Caco-2 (cell line): ENCODE measurements at regions of chr5 and their contacts with region 1.

Region 1: DNA sequence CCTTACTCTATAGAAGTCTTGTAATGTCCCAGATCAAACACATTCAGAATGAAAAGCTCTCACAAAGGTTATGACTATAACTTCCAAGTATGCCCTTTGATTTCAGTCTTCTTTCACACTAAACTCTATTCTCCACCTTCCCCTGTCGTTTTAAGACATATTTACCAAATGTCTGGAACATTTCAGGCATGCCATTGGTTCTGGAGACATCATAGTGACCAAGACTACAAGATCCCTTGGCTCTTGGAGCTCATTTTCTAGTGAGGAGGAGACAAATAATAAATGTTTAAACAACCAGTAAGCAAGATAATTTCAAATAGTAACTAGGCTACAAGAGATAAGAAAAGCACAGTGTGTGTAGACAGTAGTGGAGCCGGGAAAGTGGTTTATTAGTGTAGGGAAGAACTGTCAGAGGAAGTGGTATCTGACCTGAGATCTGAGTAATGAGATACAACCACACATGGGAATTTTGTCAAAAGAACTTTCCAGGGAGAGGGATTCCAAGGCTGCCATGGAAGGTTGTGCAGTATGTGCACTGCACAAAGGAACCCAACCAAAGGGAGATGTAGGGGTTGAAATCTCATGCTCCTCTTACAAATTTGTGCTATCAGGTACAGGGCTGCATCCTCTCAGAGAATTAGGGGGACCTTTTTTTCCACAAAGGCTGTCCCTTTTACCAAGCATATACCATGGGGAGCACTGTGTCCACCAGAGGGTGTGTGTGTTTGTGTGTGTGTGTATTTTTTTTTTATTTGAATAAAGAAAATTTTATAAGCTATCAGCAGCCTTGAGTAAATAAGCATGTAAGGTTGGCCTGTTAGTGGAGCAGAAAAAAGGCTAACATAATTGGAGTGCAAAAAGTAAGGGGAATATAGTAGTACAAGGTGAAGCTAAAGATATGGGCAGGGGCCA is 1279.1 kb upstream of the WWC1 start:
- DNase-seq: peak in 1 of 2 experiments; percentile 40
- H3K4me3 ChIP-seq: no peak overlapping the region
- H3K4me3 Mint-ChIP-seq: peak overlapping the region; percentile 1
- H3K27ac Mint-ChIP-seq: peak overlapping the region; percentile 6
- H3K4me1 ChIP-seq: peaks cover 9% of the 10 kb centered on the region; the same call in 1 of the 2 replicates
- H3K4me1 Mint-ChIP-seq: peaks cover 12% of the 10 kb centered on the region
- H3K27me3 ChIP-seq: no peaks in the 10 kb centered on the region
- H3K27me3 Mint-ChIP-seq: no peaks in the 10 kb centered on the region
- CTCF ChIP-seq: no peak

Region 2: GRCh38 chr5:166961039-166961438 is 51.3 kb before region 1 on chr5:
- CTCF ChIA-PET with region 1: no interaction called
- POLR2A ChIA-PET with region 1: no interaction called
- intact Hi-C with region 1: loop called (anchors 5 kb)
- DNase-seq: no peak
- H3K4me3 ChIP-seq: no peak overlapping the region
- H3K4me3 Mint-ChIP-seq: no peak overlapping the region
- H3K27ac Mint-ChIP-seq: no peak overlapping the region
- H3K4me1 ChIP-seq: 0 out of 2 replicates have a peak, but pooled peaks cover 4% of the 10 kb centered on the region
- H3K4me1 Mint-ChIP-seq: peaks cover 21% of the 10 kb centered on the region
- H3K27me3 ChIP-seq: no peaks in the 10 kb centered on the region
- H3K27me3 Mint-ChIP-seq: no peaks in the 10 kb centered on the region
- CTCF ChIP-seq: peak in 1 of 2 experiments; percentile 40

Region 3: DNA sequence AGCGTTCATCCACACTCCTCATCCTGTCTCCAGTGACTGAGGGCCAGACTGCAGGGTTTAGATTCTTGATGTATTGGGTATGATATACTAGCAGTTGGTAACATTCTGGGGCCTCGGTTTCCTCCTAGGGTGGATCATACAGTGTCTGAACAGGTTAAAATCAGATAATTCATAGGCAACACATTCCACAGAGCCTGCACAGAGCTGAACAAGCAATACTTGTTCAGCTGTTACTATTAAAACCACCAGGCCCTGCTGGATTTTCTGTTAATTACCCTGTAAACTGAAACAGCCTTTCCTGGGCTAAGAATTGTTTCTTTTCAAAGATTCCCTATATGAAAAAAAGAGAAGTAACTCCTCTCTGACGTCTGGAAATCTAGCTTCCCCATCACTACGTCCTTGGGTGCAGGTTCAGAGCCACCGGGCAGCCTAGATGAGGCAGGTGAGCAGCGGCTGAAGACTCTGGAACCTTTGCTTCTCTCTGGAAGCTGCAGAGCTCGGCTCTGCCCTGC is 34.4 kb before region 1 on chr5:
- CTCF ChIA-PET with region 1: no interaction called
- POLR2A ChIA-PET with region 1: interaction called, 3 read pairs
- intact Hi-C with region 1: loop called (anchors 1 kb)
- DNase-seq: no peak
- H3K4me3 ChIP-seq: peak overlapping the region; percentile 50; the same call in 1 of the 2 replicates
- H3K4me3 Mint-ChIP-seq: peak overlapping the region; percentile 87
- H3K27ac Mint-ChIP-seq: no peak overlapping the region
- H3K4me1 ChIP-seq: peaks cover 8% of the 10 kb centered on the region; the same call in 1 of the 2 replicates
- H3K4me1 Mint-ChIP-seq: peaks cover 11% of the 10 kb centered on the region
- H3K27me3 ChIP-seq: no peaks in the 10 kb centered on the region
- H3K27me3 Mint-ChIP-seq: no peaks in the 10 kb centered on the region
- CTCF ChIP-seq: no peak

Region 4: GRCh38 chr5:166992874-166993722 is 19.3 kb before region 1 on chr5:
- CTCF ChIA-PET with region 1: no interaction called
- POLR2A ChIA-PET with region 1: no interaction called
- intact Hi-C with region 1: loop called (anchors 2 kb)
- DNase-seq: no peak
- H3K4me3 ChIP-seq: no peak overlapping the region
- H3K4me3 Mint-ChIP-seq: no peak overlapping the region
- H3K27ac Mint-ChIP-seq: no peak overlapping the region
- H3K4me1 ChIP-seq: no peaks in the 10 kb centered on the region; the same call in 1 of the 2 replicates
- H3K4me1 Mint-ChIP-seq: no peaks in the 10 kb centered on the region
- H3K27me3 ChIP-seq: no peaks in the 10 kb centered on the region
- H3K27me3 Mint-ChIP-seq: no peaks in the 10 kb centered on the region
- CTCF ChIP-seq: no peak

Region 5: GRCh38 chr5:167036585-167036984 is 24.2 kb after region 1 on chr5:
- CTCF ChIA-PET with region 1: no interaction called
- POLR2A ChIA-PET with region 1: no interaction called
- intact Hi-C with region 1: loop called (anchors 2 kb)
- DNase-seq: no peak
- H3K4me3 ChIP-seq: no peak overlapping the region
- H3K4me3 Mint-ChIP-seq: no peak overlapping the region
- H3K27ac Mint-ChIP-seq: no peak overlapping the region
- H3K4me1 ChIP-seq: no peaks in the 10 kb centered on the region
- H3K4me1 Mint-ChIP-seq: no peaks in the 10 kb centered on the region
- H3K27me3 ChIP-seq: no peaks in the 10 kb centered on the region
- H3K27me3 Mint-ChIP-seq: no peaks in the 10 kb centered on the region
- CTCF ChIP-seq: no peak

Region 6: DNA sequence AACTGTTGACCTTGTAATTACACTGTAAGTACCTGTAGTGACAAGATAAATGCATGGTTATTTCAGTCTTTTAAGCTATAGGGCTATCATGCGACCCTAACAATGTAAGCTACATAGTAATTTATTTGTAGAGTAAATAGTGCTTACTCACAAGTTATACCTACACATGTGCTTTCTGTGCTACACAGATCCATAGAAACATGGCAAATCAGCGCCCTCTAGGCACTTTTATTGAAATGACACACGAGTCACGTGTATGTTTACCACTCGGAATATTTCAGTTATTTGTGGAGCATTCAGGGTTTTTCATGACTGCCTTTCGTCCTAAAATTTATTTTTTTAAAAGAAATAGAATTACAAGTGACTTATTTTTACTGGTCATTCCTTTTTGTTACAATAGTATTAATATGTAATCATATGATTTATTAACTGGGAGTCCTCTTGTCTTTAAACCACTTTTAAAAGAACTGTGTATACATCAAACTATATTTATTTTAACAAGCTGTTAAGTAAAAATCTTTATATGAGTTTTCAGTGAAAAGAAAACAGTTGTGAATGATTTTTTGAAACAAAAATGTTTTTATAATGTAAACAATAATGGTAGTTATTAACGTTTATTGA is 36.8 kb after region 1 on chr5:
- CTCF ChIA-PET with region 1: no interaction called
- POLR2A ChIA-PET with region 1: no interaction called
- intact Hi-C with region 1: loop called (anchors 1 kb)
- DNase-seq: peak; percentile 54 to 62
- H3K4me3 ChIP-seq: no peak overlapping the region
- H3K4me3 Mint-ChIP-seq: no peak overlapping the region
- H3K27ac Mint-ChIP-seq: no peak overlapping the region
- H3K4me1 ChIP-seq: no peaks in the 10 kb centered on the region
- H3K4me1 Mint-ChIP-seq: no peaks in the 10 kb centered on the region
- H3K27me3 ChIP-seq: no peaks in the 10 kb centered on the region
- H3K27me3 Mint-ChIP-seq: no peaks in the 10 kb centered on the region
- CTCF ChIP-seq: peak; percentile 52 to 72

Region 7: GRCh38 chr5:168712280-168712924 is 1700.0 kb after region 1 on chr5:
- CTCF ChIA-PET with region 1: no interaction called
- POLR2A ChIA-PET with region 1: no interaction called
- intact Hi-C with region 1: no loop called
- DNase-seq: no peak
- H3K4me3 ChIP-seq: no peak overlapping the region
- H3K4me3 Mint-ChIP-seq: no peak overlapping the region
- H3K27ac Mint-ChIP-seq: no peak overlapping the region
- H3K4me1 ChIP-seq: no peaks in the 10 kb centered on the region
- H3K4me1 Mint-ChIP-seq: no peaks in the 10 kb centered on the region
- H3K27me3 ChIP-seq: no peaks in the 10 kb centered on the region
- H3K27me3 Mint-ChIP-seq: no peaks in the 10 kb centered on the region
- CTCF ChIP-seq: no peak